ENCODE measurements at regions of chr7 and their contacts with region 1.

Region 1: DNA sequence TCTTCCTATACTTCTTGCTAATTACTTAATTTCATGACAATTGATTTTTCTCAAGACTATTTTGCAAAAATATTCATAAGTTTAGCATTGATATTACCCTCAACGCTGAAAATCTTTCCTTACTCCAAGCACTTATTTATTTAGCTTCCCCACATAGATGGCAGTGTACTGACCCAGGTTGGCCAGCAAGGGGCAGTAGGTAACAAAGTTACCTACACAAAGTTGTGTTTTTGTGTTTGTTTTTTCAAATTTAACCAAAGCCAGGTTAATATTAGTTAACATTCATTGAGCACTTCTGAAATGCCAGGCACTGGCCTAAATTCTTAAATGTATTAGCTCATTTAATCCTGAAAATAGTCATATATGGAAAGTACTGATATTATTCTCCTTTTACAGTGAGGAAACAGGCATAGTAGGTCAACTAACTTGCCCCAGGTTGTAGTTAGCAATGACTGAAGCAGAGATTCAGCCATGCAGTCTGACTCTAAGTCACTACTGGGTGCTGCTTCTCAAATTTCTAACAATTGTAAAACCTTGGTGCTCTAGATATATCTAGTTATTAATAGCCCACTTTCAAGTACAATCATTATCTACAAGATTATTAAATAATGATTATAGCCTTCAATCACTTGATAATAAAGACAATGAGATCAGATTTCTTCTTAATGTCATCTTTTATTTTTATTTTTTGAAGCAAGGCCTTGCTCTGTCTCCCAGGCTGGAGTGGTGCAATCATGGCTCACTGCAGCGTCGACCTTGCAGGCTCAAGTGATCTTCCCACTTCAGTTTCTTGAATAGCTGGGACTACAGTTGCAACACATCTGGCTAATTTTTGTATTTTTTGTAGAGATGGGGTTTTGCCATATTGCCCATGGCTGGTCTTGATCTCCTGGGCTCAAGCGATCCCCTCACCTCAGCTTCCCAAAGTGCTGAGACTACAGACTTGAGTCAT is 5.8 kb upstream of the GGCT start:
- DNase-seq: peak; percentile 49
- ATAC-seq: peak; percentile 55
- H3K4me3 Mint-ChIP-seq: no peak overlapping the region
- H3K27ac Mint-ChIP-seq: no peak overlapping the region
- H3K4me1 Mint-ChIP-seq: peaks cover 6% of the 10 kb centered on the region
- H3K27me3 Mint-ChIP-seq: no peaks in the 10 kb centered on the region

Region 2: GRCh38 chr7:30521532-30521931 is 11.1 kb after region 1 on chr7:
- CTCF ChIA-PET with region 1: interaction called, 10 read pairs
- POLR2A ChIA-PET with region 1: no interaction called
- DNase-seq: no peak
- ATAC-seq: no peak
- H3K4me3 Mint-ChIP-seq: no peak overlapping the region
- H3K27ac Mint-ChIP-seq: no peak overlapping the region
- H3K4me1 Mint-ChIP-seq: peaks cover 5% of the 10 kb centered on the region
- H3K27me3 Mint-ChIP-seq: no peaks in the 10 kb centered on the region

Region 3: DNA sequence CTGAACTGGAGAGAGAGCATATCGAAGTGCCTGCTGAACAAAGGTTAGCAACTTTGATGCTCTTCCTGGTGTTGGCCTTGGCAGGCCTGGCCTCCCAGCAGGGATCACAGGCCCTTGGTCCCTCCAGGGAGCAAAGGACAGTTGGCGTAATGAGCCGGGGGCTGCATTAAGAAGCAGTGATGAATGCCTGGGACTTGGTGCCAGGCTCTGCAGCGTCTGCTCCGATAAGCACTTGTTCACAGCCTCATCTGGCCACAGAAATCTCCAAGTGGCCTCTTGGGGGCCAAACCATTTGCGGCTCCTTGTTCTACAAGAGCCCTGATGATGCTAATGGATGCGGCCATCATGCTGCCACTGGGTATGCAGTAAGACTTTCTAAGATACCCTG is 140.0 kb after region 1 on chr7:
- CTCF ChIA-PET with region 1: no interaction called
- POLR2A ChIA-PET with region 1: no interaction called
- DNase-seq: no peak
- ATAC-seq: no peak
- H3K4me3 Mint-ChIP-seq: no peak overlapping the region
- H3K27ac Mint-ChIP-seq: no peak overlapping the region
- H3K4me1 Mint-ChIP-seq: no peaks in the 10 kb centered on the region
- H3K27me3 Mint-ChIP-seq: no peaks in the 10 kb centered on the region

Measured in activated CD8-positive, alpha-beta T cell treated with anti-CD3 and anti-CD28 coated beads, Interleukin-2, amount 10 ng/mL, durations not matched to agents 7 days and 5 days (primary cell).